Heart left ventricle (tissue), 16 donors: ENCODE measurements at regions of chr15 and their contacts with region 1.

Region 1: GRCh38 chr15:68431792-68432401 is at the start of gene ITGA11:
- DNase-seq: peak; percentile 73 to 87 (median 82)
- ATAC-seq: peak; percentile 72 to 92 (median 86)
- H3K4me3 ChIP-seq: peak within 1 kb of the TSS; percentile 39 to 67 (median 58)
- H3K27ac ChIP-seq: peak within 1 kb of the TSS in 10 of 12 donors; percentile 26 to 72 (median 44)
- H3K4me1 ChIP-seq: peaks cover 0 to 21% (median 15%) of the 10 kb centered on the region in 12 donors
- H3K27me3 ChIP-seq: peaks cover 5 to 47% (median 22%) of the 10 kb centered on the region in 9 donors
- CTCF ChIP-seq: no peak
- POLR2A ChIP-seq: peak in 1 of 2 donors; percentile 26
- total RNA-seq, gene ITGA11: 7.8 to 35.5 (median 12.8) TPM

Region 2: DNA sequence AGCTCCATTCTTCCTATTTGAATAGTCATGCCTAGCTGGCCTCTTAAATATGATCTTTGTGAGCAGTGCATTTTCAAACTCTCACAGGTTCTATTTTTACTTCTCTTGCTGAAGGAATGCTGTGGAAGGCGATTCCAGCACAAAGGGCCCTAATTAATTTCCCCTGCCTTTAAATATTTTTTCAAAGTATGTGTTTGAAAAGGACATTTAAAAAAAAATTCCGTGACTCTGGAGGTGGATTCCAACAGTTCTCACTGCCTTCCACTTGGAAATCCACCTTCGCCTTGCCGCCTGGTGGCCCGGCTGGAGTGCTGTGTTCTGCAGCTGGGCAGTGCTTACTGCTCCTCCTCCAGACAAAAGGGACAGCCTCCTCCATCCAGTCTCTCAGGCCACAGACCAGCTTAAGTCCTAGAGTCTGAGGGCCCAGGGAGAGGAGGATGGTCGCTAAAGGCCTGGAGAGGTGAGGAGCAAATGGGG is 85.4 kb after region 1 on chr15:
- intact Hi-C with region 1: loop called in 1 of 10 experiments (anchors 10 kb)
- DNase-seq: peak in 3 of 5 donors; percentile 60 to 72 (median 60)
- ATAC-seq: peak; percentile 63 to 90 (median 86)
- H3K4me3 ChIP-seq: no peak overlapping the region
- H3K27ac ChIP-seq: peak overlapping the region in 11 of 12 donors; percentile 13 to 68 (median 41)
- H3K4me1 ChIP-seq: peaks cover 0 to 26% (median 15%) of the 10 kb centered on the region in 12 donors
- H3K27me3 ChIP-seq: no peaks in the 10 kb centered on the region
- CTCF ChIP-seq: peak in 10 of 12 donors; percentile 6 to 45 (median 32)
- POLR2A ChIP-seq: no peak